ENCODE measurements at regions of chr1 and their contacts with region 1.

Region 1: GRCh38 chr1:2044510-2045319 is 5.5 kb upstream of the PRKCZ start:
- DNase-seq: peak; percentile 49 to 83 (median 73)
- H3K4me3 ChIP-seq: peak overlapping the region in 1 of 4 donors; percentile 26
- H3K27ac ChIP-seq: no peak overlapping the region
- H3K4me1 ChIP-seq: peaks cover 8 to 20% of the 10 kb centered on the region in 2 donors
- H3K27me3 ChIP-seq: no peaks in the 10 kb centered on the region
- CTCF ChIP-seq: peak; percentile 38 to 98 (median 78)
- POLR2A ChIP-seq: no peak

Region 2: GRCh38 chr1:1943834-1944570 is 100.7 kb before region 1 on chr1:
- intact Hi-C with region 1: loop called in 1 of 2 experiments (anchors 5 kb)
- DNase-seq: peak; percentile 56 to 72 (median 62)
- H3K4me3 ChIP-seq: no peak overlapping the region
- H3K27ac ChIP-seq: no peak overlapping the region
- H3K4me1 ChIP-seq: peaks cover 0 to 4% of the 10 kb centered on the region in 2 donors
- H3K27me3 ChIP-seq: no peaks in the 10 kb centered on the region
- CTCF ChIP-seq: peak; percentile 82 to 93 (median 88)
- POLR2A ChIP-seq: no peak

Region 3: GRCh38 chr1:1959840-1960479 is 84.8 kb before region 1 on chr1:
- intact Hi-C with region 1: loop called (anchors 5 kb)
- DNase-seq: peak; percentile 90 to 94 (median 91)
- H3K4me3 ChIP-seq: peak overlapping the region in 1 of 4 donors; percentile 31
- H3K27ac ChIP-seq: no peak overlapping the region
- H3K4me1 ChIP-seq: peaks cover 0 to 8% of the 10 kb centered on the region in 2 donors
- H3K27me3 ChIP-seq: no peaks in the 10 kb centered on the region
- CTCF ChIP-seq: peak; percentile 86 to 97 (median 94)
- POLR2A ChIP-seq: peak in 1 of 2 donors; percentile 12

Region 4: DNA sequence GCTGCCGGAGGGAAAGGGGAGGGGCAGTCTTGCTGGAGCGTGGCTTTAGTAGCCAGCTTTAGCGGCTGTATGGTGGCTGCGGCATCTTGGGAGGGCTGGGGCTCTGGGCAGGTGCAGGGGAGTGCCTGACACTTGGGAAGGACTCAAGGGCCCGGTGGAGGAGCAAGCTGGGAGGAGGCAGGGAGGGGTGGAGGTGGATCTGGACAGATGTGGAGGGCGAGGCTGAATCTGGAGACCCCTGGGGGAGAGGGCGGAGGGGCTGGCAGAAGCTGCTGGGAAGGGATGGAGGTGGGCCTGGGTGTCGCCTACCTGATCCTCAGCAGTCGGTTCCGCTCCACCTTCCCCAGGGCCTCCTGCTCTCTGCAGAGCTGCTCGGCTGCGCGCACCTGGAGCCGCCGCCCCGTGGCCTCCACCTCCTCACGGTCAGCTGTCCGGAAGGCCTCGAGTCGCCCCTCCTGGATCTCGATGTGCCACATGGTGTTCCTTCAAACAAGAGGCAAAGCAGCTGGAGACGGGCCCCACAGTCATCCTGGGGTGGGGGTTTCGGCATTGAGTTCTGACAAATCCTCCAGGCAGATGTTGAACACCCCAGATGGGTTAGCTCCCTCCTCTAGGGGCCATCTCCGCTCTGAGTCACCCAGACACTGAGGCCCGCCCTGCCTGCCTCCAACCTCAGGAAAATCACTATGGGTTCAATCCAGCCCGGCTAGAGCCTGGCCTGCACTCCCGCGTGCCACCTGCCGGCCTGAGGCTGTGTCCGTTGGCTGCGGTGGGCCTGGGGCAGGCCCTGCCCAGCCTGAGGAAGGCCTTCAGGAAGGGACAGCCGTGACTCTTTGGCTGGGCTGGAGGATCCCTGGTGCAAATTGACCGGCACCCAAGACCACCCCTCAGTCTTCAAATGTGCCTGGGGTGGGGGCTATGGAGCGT is 70.7 kb before region 1 on chr1:
- intact Hi-C with region 1: no loop called
- DNase-seq: no peak
- H3K4me3 ChIP-seq: no peak overlapping the region
- H3K27ac ChIP-seq: no peak overlapping the region
- H3K4me1 ChIP-seq: no peaks in the 10 kb centered on the region
- H3K27me3 ChIP-seq: no peaks in the 10 kb centered on the region
- CTCF ChIP-seq: no peak
- POLR2A ChIP-seq: no peak

Region 5: GRCh38 chr1:2966449-2967328 is 922.0 kb after region 1 on chr1:
- intact Hi-C with region 1: no loop called
- DNase-seq: peak in 1 of 7 donors; percentile 8
- H3K4me3 ChIP-seq: no peak overlapping the region
- H3K27ac ChIP-seq: no peak overlapping the region
- H3K4me1 ChIP-seq: no peaks in the 10 kb centered on the region
- H3K27me3 ChIP-seq: no peaks in the 10 kb centered on the region
- CTCF ChIP-seq: no peak
- POLR2A ChIP-seq: no peak